Activated CD4-positive, alpha-beta memory T cell treated with anti-CD3 and anti-CD28 coated beads for 36 hours (primary cell): ENCODE measurements at regions of chr2 and their contacts with region 1.

Region 1: GRCh38 chr2:17719562-17720371 is 33.8 kb downstream of the SMC6 start:
- DNase-seq: no peak
- H3K4me3 Mint-ChIP-seq: no peak overlapping the region
- H3K27ac Mint-ChIP-seq: no peak overlapping the region
- H3K4me1 Mint-ChIP-seq: no peaks in the 10 kb centered on the region
- H3K27me3 Mint-ChIP-seq: no peaks in the 10 kb centered on the region

Region 2: GRCh38 chr2:16727256-16727655 is 992.5 kb before region 1 on chr2:
- CTCF ChIA-PET with region 1: no interaction called
- POLR2A ChIA-PET with region 1: no interaction called
- intact Hi-C with region 1: no loop called
- DNase-seq: no peak
- H3K4me3 Mint-ChIP-seq: no peak overlapping the region
- H3K27ac Mint-ChIP-seq: no peak overlapping the region
- H3K4me1 Mint-ChIP-seq: peaks cover 7% of the 10 kb centered on the region
- H3K27me3 Mint-ChIP-seq: peaks cover 8% of the 10 kb centered on the region

Region 3: GRCh38 chr2:17620280-17620679 is 99.5 kb before region 1 on chr2:
- CTCF ChIA-PET with region 1: no interaction called
- POLR2A ChIA-PET with region 1: no interaction called
- intact Hi-C with region 1: no loop called
- DNase-seq: no peak
- H3K4me3 Mint-ChIP-seq: no peak overlapping the region
- H3K27ac Mint-ChIP-seq: no peak overlapping the region
- H3K4me1 Mint-ChIP-seq: no peaks in the 10 kb centered on the region
- H3K27me3 Mint-ChIP-seq: peaks cover 9% of the 10 kb centered on the region

Region 4: GRCh38 chr2:17661460-17661859 is 58.3 kb before region 1 on chr2:
- CTCF ChIA-PET with region 1: no interaction called
- POLR2A ChIA-PET with region 1: no interaction called
- intact Hi-C with region 1: no loop called
- DNase-seq: no peak
- H3K4me3 Mint-ChIP-seq: no peak overlapping the region
- H3K27ac Mint-ChIP-seq: no peak overlapping the region
- H3K4me1 Mint-ChIP-seq: peaks cover 13% of the 10 kb centered on the region
- H3K27me3 Mint-ChIP-seq: no peaks in the 10 kb centered on the region

Region 5: DNA sequence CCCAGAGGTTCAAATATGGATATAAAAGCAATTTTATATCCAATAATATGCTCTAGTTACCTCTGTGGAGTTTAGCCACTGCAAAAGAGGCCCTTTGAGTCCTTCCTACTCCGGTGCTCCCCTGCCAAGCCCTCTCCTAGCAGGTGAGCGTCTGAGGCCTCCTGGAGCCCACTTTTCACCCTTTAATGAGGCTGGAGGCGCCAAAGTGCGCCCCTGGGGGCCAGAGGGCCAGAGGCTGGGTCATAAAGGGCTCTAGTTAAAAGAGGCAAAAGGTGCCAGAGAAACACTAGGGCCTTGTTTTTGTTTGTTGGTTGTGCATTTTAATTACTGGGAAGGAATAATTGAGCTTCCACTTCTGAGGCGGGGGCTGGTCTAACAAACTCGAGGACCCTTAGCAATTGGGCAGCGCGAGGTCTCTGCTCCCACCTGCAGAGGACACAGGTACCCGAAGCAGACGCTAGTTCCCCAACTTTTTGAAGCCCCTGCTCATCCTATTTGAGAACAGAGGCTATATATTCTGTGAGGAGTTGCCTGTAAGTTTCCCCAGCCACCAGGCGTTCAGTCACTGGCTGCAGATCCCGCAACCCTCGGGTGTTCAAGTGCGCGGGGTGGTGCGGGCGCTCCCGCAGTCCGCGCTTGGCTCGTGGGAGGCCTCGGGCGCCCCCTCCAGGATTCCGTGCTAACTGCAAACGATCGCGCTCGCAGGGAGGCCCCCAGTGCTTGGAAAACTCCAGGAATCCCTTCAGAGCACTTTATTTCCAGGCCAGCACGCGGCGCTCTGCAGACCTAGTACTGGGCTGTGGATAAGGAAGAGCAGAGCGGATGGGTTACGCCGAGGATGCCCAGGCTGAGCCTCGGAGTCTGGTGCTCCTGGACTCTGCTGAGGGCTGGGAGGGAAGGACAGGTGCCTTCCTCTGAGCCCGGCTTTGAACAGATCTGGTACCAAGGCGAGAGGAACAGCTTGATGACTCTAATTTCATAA is 110.6 kb after region 1 on chr2:
- CTCF ChIA-PET with region 1: interaction called, 9 read pairs
- POLR2A ChIA-PET with region 1: no interaction called
- intact Hi-C with region 1: loop called (anchors 2 kb)
- DNase-seq: peak; percentile 59
- H3K4me3 Mint-ChIP-seq: no peak overlapping the region
- H3K27ac Mint-ChIP-seq: no peak overlapping the region
- H3K4me1 Mint-ChIP-seq: no peaks in the 10 kb centered on the region
- H3K27me3 Mint-ChIP-seq: peaks cover 26% of the 10 kb centered on the region